AG04450 (cell line): ENCODE measurements at regions of chr14 and their contacts with region 1.

Region 1: DNA sequence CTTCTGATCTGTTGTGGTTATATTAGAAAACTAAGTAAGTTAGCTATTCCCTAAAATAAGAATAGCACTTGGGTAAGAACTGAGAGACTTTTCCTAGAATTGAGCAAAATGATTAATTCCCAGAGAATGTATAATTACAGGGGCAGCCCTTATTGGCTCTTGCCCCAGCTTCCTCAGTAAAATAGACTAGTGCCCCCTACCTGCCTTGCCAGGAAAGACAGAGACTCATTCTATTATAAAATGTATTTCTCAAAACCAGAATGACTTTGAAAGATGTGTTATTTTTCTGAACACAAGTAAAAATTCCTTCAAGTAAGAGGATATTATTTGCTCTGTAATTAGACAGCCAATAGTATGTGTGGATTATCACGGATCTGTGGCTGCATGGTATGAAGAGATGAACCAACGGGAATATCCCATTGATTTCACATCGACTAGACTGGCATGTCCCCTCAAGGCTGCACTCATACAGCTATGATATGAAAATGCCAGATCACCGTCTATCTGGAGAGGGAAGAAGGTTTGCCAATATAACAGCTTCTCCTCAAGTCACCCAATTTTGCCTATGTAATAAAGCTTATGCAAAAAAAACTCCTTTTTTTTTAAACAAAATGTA is 7.4 kb upstream of the GLRX5 start:
- DNase-seq: no peak
- H3K4me3 ChIP-seq: 0 out of 2 replicates have a peak overlapping the region, but pooled peaks have one; percentile 17
- H3K27ac ChIP-seq: no peak overlapping the region
- H3K27me3 ChIP-seq: no peaks in the 10 kb centered on the region
- CTCF ChIP-seq: peak; percentile 77

Region 2: GRCh38 chr14:94780536-94781399 is 746.7 kb before region 1 on chr14:
- CTCF ChIA-PET with region 1: no interaction called
- POLR2A ChIA-PET with region 1: no interaction called
- DNase-seq: no peak
- H3K4me3 ChIP-seq: no peak overlapping the region
- H3K27ac ChIP-seq: no peak overlapping the region
- H3K27me3 ChIP-seq: no peaks in the 10 kb centered on the region
- CTCF ChIP-seq: no peak

Region 3: GRCh38 chr14:95424529-95424928 is 103.0 kb before region 1 on chr14:
- CTCF ChIA-PET with region 1: interaction called, 31 read pairs
- POLR2A ChIA-PET with region 1: no interaction called
- DNase-seq: no peak
- H3K4me3 ChIP-seq: no peak overlapping the region
- H3K27ac ChIP-seq: no peak overlapping the region
- H3K27me3 ChIP-seq: no peaks in the 10 kb centered on the region
- CTCF ChIP-seq: no peak

Region 4: GRCh38 chr14:95452176-95452892 is 75.2 kb before region 1 on chr14:
- CTCF ChIA-PET with region 1: interaction called, 13 read pairs
- POLR2A ChIA-PET with region 1: no interaction called
- DNase-seq: no peak
- H3K4me3 ChIP-seq: no peak overlapping the region
- H3K27ac ChIP-seq: no peak overlapping the region
- H3K27me3 ChIP-seq: no peaks in the 10 kb centered on the region
- CTCF ChIP-seq: peak; percentile 52

Region 5: GRCh38 chr14:95483309-95484165 is 44.0 kb before region 1 on chr14:
- CTCF ChIA-PET with region 1: interaction called, 43 read pairs
- POLR2A ChIA-PET with region 1: interaction called, 6 read pairs
- DNase-seq: peak; percentile 87
- H3K4me3 ChIP-seq: no peak overlapping the region
- H3K27ac ChIP-seq: peak overlapping the region; percentile 81
- H3K27me3 ChIP-seq: no peaks in the 10 kb centered on the region
- CTCF ChIP-seq: no peak

Region 6: DNA sequence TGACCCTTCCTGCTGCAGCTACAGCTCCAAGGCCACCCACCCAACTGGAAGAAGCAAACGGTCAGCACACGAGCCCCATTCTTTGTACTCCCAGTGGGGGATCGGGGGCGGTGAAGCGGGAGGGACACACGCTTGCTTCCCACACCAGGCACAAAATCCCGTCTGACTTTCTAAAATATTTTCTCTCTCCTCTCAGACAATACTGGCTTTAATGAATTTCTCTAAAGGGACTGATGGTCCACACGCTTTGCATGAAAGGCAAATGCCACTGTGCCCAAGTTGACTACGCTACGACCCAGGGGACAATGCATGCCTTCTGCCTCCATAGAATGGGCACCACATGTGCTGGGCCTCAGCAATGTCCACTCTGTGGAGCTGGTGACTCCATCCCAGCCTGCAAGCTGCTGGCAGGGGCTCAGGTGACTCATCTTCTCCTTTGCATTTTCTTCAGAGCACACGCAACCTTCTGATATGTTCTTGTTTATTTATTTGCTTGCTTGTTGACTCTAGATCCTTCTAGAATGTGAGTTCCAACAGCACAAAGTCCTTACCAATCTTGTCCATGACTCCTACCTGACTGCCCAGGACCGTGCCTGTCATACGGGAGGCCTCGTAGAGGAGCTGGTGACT is 26.6 kb before region 1 on chr14:
- CTCF ChIA-PET with region 1: interaction called, 17 read pairs
- POLR2A ChIA-PET with region 1: interaction called, 4 read pairs
- DNase-seq: peak; percentile 65
- H3K4me3 ChIP-seq: no peak overlapping the region
- H3K27ac ChIP-seq: peak overlapping the region; percentile 39
- H3K27me3 ChIP-seq: no peaks in the 10 kb centered on the region
- CTCF ChIP-seq: no peak

Region 7: GRCh38 chr14:95515596-95516552 is 11.6 kb before region 1 on chr14:
- CTCF ChIA-PET with region 1: interaction called, 33 read pairs
- POLR2A ChIA-PET with region 1: interaction called, 4 read pairs
- DNase-seq: no peak
- H3K4me3 ChIP-seq: peak overlapping the region; percentile 66
- H3K27ac ChIP-seq: no peak overlapping the region
- H3K27me3 ChIP-seq: no peaks in the 10 kb centered on the region
- CTCF ChIP-seq: peak; percentile 37

Region 8: GRCh38 chr14:96090441-96091133 is 563.1 kb after region 1 on chr14:
- CTCF ChIA-PET with region 1: no interaction called
- POLR2A ChIA-PET with region 1: no interaction called
- DNase-seq: peak; percentile 26
- H3K4me3 ChIP-seq: no peak overlapping the region
- H3K27ac ChIP-seq: peak overlapping the region; percentile 31
- H3K27me3 ChIP-seq: no peaks in the 10 kb centered on the region
- CTCF ChIP-seq: 0 out of 2 replicates have a peak, but pooled peaks have one; percentile 20